ENCODE measurements at regions of chr5 and their contacts with region 1.

Region 1: DNA sequence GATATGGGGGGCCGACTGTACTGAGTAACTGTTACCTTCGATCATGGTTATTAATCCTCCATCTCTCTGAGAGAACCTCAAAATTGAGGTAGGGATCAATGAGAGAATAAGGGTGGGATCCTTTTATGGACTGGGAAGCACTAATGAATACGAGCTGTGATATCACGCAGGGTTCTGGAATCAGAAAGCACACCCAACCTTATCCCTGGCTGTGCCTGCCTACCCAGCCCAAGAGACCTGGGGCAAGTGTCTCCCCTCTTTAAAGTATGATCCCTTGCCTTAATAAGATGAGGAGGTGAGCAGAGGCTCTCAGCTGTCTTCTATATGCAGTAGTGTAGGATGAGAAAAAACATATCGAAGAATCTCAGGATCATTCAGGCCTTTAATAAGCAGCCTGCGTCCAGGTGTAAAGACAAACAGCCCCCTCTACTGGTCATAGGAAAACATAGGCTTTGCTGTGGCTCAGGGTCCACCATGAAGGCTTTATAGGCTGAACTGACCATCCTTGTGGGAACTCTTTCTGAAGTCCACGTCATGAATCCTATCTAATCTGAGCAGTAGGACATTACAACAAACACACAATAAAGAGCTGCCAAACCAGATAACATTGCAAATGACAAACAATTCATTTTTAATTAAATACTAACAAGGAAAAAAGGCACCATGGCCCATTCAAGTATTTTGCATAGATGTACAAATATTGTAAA is 16.8 kb downstream of the NIPAL4 start:
- DNase-seq: peak; percentile 45
- ATAC-seq: peak; percentile 90
- H3K4me3 ChIP-seq: no peak overlapping the region
- H3K27ac ChIP-seq: no peak overlapping the region
- H3K4me1 ChIP-seq: no peaks in the 10 kb centered on the region
- H3K27me3 ChIP-seq: no peaks in the 10 kb centered on the region
- CTCF ChIP-seq: peak; percentile 79 to 93 (median 92)
- POLR2A ChIP-seq: no peak
- RAD21 ChIP-seq: peak; percentile 95

Region 2: DNA sequence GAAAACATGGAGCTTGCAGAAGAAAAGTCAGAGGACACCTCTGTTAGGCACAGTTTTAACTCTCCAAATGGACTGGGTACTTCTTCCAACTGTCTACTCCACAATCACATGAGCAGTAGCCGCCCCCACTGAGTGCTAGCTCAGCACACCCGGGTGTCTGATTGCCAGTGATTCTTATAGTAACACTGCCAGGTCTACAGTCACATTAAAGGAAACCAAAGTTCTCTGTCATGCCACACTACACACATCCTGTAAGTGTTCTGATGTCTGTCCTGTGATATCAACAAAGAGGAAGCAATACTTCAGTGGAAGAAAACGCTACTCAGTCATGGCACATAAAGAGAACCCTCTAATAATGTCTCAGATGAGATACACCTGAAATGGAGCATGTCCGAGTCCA is 367.9 kb before region 1 on chr5 and contains the start of gene HAVCR2:
- CTCF ChIA-PET with region 1: no interaction called
- POLR2A ChIA-PET with region 1: no interaction called
- RAD21 ChIA-PET with region 1: no interaction called
- intact Hi-C with region 1: no loop called
- DNase-seq: no peak
- ATAC-seq: no peak
- H3K4me3 ChIP-seq: no peak within 1 kb of the TSS
- H3K27ac ChIP-seq: no peak within 1 kb of the TSS
- H3K4me1 ChIP-seq: no peaks in the 10 kb centered on the region
- H3K27me3 ChIP-seq: no peaks in the 10 kb centered on the region
- CTCF ChIP-seq: no peak
- POLR2A ChIP-seq: no peak
- RAD21 ChIP-seq: no peak
- total RNA-seq, gene HAVCR2: 0.07 TPM

Region 3: DNA sequence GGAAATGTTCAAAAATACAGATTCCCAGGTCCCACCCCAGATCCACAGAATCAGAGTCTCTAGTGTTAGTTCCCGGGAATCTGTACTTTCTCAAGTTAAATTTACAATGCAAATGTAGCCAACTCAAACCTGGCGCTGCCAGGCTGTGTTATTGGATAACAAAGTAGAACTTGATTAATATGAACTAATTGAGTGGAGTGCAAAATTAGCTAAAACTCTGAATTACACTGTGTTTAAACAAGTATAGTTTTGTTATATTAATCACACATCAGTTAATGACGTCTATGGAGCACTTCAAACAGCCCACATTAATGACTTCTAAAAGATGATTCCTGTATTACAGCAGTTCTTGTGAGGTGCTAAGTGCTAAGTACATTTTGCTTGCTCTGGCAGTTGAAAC is 243.3 kb before region 1 on chr5:
- CTCF ChIA-PET with region 1: no interaction called
- POLR2A ChIA-PET with region 1: no interaction called
- RAD21 ChIA-PET with region 1: no interaction called
- intact Hi-C with region 1: no loop called
- DNase-seq: no peak
- ATAC-seq: no peak
- H3K4me3 ChIP-seq: no peak overlapping the region
- H3K27ac ChIP-seq: no peak overlapping the region
- H3K4me1 ChIP-seq: no peaks in the 10 kb centered on the region
- H3K27me3 ChIP-seq: no peaks in the 10 kb centered on the region
- CTCF ChIP-seq: no peak
- POLR2A ChIP-seq: no peak
- RAD21 ChIP-seq: no peak

Region 4: GRCh38 chr5:157253547-157253946 is 223.3 kb before region 1 on chr5:
- CTCF ChIA-PET with region 1: no interaction called
- POLR2A ChIA-PET with region 1: no interaction called
- RAD21 ChIA-PET with region 1: no interaction called
- intact Hi-C with region 1: loop called (anchors 1 kb)
- DNase-seq: peak; percentile 28
- ATAC-seq: peak; percentile 97
- H3K4me3 ChIP-seq: no peak overlapping the region
- H3K27ac ChIP-seq: no peak overlapping the region
- H3K4me1 ChIP-seq: no peaks in the 10 kb centered on the region
- H3K27me3 ChIP-seq: no peaks in the 10 kb centered on the region
- CTCF ChIP-seq: peak; percentile 84 to 91 (median 88)
- POLR2A ChIP-seq: no peak
- RAD21 ChIP-seq: peak; percentile 89

Region 5: GRCh38 chr5:157342822-157343402 is 133.9 kb before region 1 on chr5:
- CTCF ChIA-PET with region 1: interaction called, 7 read pairs
- POLR2A ChIA-PET with region 1: no interaction called
- RAD21 ChIA-PET with region 1: no interaction called
- intact Hi-C with region 1: loop called (anchors 1 kb)
- DNase-seq: peak; percentile 23
- ATAC-seq: peak; percentile 96
- H3K4me3 ChIP-seq: no peak overlapping the region
- H3K27ac ChIP-seq: no peak overlapping the region
- H3K4me1 ChIP-seq: no peaks in the 10 kb centered on the region
- H3K27me3 ChIP-seq: no peaks in the 10 kb centered on the region
- CTCF ChIP-seq: peak; percentile 66 to 85 (median 80); a peak in 5 of 6 replicates
- POLR2A ChIP-seq: no peak
- RAD21 ChIP-seq: peak; percentile 64

Region 6: DNA sequence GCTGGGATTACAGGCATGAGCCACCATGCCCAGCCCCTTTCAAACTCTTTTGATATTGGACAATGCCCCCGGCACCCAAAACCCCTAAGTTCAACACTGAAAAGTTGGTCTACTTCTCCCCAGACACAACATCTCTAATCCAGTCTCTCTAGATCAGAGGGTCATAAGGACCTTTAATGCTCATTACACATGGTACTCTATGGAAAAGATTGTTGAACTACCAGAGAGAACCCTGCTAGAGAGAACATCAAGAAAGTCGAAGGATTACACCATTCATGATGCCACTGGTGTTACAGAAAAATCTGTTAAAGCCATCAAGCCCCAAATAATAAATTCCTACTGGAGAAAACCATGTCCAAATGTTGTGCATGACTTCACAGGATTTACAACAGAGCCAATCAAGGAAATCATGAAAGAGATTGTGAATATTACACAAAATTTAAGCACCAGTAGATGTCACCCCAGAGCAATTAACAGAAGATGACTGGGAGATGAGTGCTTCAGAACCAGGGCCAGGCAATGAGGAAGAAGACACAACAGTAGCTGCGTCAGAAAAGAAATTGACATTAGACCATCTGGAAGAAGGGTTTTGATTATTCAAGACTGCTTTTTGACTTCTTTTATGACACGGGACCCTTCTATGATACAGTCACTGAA is 45.2 kb before region 1 on chr5:
- CTCF ChIA-PET with region 1: interaction called, 9 read pairs
- POLR2A ChIA-PET with region 1: no interaction called
- RAD21 ChIA-PET with region 1: interaction called, 3 to 5 read pairs
- intact Hi-C with region 1: loop called (anchors 2 kb)
- DNase-seq: peak; percentile 38
- ATAC-seq: peak; percentile 98
- H3K4me3 ChIP-seq: no peak overlapping the region
- H3K27ac ChIP-seq: no peak overlapping the region
- H3K4me1 ChIP-seq: peaks cover 0 to 7% of the 10 kb centered on the region in 2 experiments; a peak in 2 of 4 replicates
- H3K27me3 ChIP-seq: no peaks in the 10 kb centered on the region
- CTCF ChIP-seq: peak; percentile 39 to 85 (median 60); a peak in 4 of 6 replicates
- POLR2A ChIP-seq: no peak
- RAD21 ChIP-seq: peak; percentile 84